Ovary (tissue), 10 donors: ENCODE measurements at regions of chr9 and their contacts with region 1.

Region 1: GRCh38 chr9:127178686-127179632 is 56.5 kb upstream of the ANGPTL2 start:
- DNase-seq: peak; percentile 70 to 79 (median 75)
- H3K4me3 ChIP-seq: no peak overlapping the region
- H3K27ac ChIP-seq: peak overlapping the region; percentile 8 to 54
- H3K4me1 ChIP-seq: peaks cover 24% of the 10 kb centered on the region
- H3K27me3 ChIP-seq: no peaks in the 10 kb centered on the region
- CTCF ChIP-seq: no peak
- EP300 ChIP-seq: no peak
- POLR2A ChIP-seq: no peak

Region 2: DNA sequence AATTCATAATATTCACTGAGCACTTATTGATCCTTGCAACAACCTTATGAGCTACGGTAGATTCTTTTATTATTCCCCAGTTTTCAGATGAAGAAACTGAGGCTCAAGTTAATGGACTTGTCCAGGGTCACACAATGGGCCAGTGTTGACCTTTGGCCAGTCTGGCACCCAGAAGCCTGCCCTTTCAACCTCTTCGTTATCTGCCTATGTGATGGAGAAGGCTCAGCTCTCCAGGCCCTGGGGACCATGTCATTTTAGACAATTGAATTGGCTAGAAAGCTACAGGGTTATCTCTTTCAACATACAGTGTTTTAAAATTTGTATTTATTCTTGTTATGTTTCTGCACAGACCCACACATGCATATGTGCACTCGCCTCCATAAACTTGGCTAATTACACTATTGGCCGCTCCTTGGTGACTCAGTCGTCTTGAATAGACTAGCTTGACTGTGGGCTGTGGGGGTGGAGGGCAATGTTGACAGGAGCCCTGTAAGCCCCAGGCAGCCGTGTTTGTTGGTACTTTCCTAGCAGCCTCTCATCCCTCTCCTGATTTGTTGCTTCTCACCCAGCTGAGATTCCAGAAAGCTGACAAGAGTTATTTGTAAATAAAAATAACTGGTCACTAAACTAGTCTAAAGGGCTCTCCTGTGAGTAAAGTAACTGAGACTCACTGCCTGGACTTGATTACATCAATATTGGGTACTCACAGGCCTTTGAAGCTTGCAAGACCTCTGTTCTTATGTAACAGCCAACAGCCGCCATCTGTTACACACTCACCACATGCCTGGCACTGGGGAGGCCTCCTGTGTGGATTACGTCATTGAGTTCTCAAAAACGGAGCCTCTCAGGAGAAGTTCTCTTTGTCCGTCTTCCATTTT is 48.1 kb before region 1 on chr9:
- intact Hi-C with region 1: loop called in 3 of 4 experiments (anchors 5 to 10 kb)
- DNase-seq: peak; percentile 39 to 63 (median 54)
- H3K4me3 ChIP-seq: no peak overlapping the region
- H3K27ac ChIP-seq: no peak overlapping the region
- H3K4me1 ChIP-seq: peaks cover 12% of the 10 kb centered on the region
- H3K27me3 ChIP-seq: no peaks in the 10 kb centered on the region
- CTCF ChIP-seq: no peak
- EP300 ChIP-seq: no peak
- POLR2A ChIP-seq: no peak

Region 3: DNA sequence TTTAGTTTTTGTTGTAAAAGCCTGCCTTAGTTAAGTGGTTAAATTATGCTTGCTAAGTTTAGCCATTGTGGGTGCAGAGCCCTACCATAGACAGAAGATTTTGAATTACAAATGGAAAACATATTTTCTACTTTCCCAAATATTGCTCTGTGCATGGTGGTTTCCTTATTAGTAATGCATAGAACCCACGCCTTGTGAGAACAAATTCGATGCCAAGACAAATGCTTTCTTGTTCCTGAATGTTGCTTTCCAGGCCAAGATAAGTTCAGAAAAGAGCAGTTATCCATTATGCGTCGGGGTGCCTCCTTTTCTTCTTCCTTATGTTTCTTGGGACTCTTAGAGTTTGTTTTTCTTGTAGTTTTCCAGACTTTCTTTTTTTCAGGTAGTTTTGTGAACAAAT is 54.6 kb after region 1 on chr9:
- intact Hi-C with region 1: no loop called
- DNase-seq: no peak
- H3K4me3 ChIP-seq: no peak overlapping the region
- H3K27ac ChIP-seq: no peak overlapping the region
- H3K4me1 ChIP-seq: peaks cover 4% of the 10 kb centered on the region
- H3K27me3 ChIP-seq: no peaks in the 10 kb centered on the region
- CTCF ChIP-seq: no peak
- EP300 ChIP-seq: no peak
- POLR2A ChIP-seq: no peak